CD14-positive monocyte (primary cell): ENCODE measurements at regions of chr1 and their contacts with region 1.

Region 1: DNA sequence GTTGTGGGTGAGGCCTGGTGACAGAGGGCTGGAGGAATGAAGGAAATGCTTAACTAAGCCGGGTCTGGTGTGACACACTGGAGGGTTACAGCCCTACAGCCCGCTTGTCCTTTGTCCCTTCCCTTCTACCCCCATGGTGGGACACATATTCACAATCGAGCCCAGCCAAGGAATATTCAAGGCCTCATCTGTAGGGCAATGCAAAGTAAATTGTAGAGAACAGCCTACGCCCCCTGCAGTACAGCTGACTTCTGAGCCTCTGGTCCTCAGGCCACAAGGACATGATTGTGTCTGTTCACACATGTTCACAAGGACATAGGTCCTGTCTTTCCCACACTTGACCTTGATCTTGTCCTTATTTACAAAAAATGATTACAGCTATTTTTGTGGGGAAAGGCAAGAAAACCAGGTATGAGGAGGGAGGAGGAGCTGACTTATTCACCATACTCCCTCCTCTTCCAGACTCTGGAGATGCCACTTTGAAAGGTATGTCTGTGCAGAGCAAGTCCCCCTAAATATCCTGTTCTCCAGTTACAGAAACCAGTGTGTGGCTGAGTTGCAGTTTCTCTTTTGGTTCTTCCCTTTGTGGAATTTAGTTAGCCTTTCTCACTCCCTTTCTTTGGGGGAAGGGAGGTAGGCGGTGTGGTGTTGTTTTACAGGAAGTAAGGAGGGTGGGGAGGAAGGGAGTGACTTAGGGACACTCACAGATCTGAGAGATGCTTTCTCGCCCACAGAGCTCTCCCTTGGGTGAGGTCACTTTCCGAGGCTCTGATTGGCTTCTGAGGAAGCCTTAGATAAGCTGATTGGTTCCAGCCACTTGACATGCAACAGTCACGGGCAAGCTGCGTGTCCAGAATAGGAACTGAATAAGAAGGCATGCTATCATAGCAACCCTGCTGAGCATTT is 14.6 kb downstream of the POLR3GL start:
- DNase-seq: peak; percentile 98 to 100 (median 100)
- H3K4me3 ChIP-seq: peak overlapping the region; percentile 26 to 74 (median 69)
- H3K4me3 Mint-ChIP-seq: no peak overlapping the region
- H3K27ac ChIP-seq: peak overlapping the region; percentile 85 to 99
- H3K27ac Mint-ChIP-seq: no peak overlapping the region
- H3K4me1 ChIP-seq: peaks cover 55 to 71% of the 10 kb centered on the region in 2 donors
- H3K4me1 Mint-ChIP-seq: peaks cover 29% of the 10 kb centered on the region
- H3K27me3 ChIP-seq: no peaks in the 10 kb centered on the region
- H3K27me3 Mint-ChIP-seq: peaks cover 0 to 2% (median 0%) of the 10 kb centered on the region in 3 donors
- CTCF ChIP-seq: peak; percentile 22

Region 2: GRCh38 chr1:145730900-145731299 is 248.2 kb before region 1 on chr1:
- intact Hi-C with region 1: no loop called
- DNase-seq: no peak
- H3K4me3 ChIP-seq: no peak overlapping the region
- H3K4me3 Mint-ChIP-seq: no peak overlapping the region
- H3K27ac ChIP-seq: no peak overlapping the region
- H3K27ac Mint-ChIP-seq: no peak overlapping the region
- H3K4me1 ChIP-seq: no peaks in the 10 kb centered on the region
- H3K4me1 Mint-ChIP-seq: no peaks in the 10 kb centered on the region
- H3K27me3 ChIP-seq: no peaks in the 10 kb centered on the region
- H3K27me3 Mint-ChIP-seq: peaks cover 0 to 1% (median 0%) of the 10 kb centered on the region in 3 donors
- CTCF ChIP-seq: no peak

Region 3: GRCh38 chr1:145996433-145997015 is 17.4 kb after region 1 on chr1 and contains the start of gene TXNIP:
- intact Hi-C with region 1: loop called (anchors 1 kb)
- DNase-seq: peak; percentile 91 to 97 (median 96)
- H3K4me3 ChIP-seq: peak within 1 kb of the TSS; percentile 87 to 100 (median 99)
- H3K4me3 Mint-ChIP-seq: peak within 1 kb of the TSS; percentile 99 to 100
- H3K27ac ChIP-seq: peak within 1 kb of the TSS; percentile 78 to 84
- H3K27ac Mint-ChIP-seq: peak within 1 kb of the TSS; percentile 93 to 99 (median 97)
- H3K4me1 ChIP-seq: peaks cover 46 to 67% of the 10 kb centered on the region in 2 donors
- H3K4me1 Mint-ChIP-seq: peaks cover 65% of the 10 kb centered on the region
- H3K27me3 ChIP-seq: no peaks in the 10 kb centered on the region
- H3K27me3 Mint-ChIP-seq: peaks cover 0 to 5% (median 0%) of the 10 kb centered on the region in 3 donors
- CTCF ChIP-seq: no peak
- polyA plus RNA-seq, gene TXNIP: 640 to 3,778 (median 844) TPM